ENCODE measurements at regions of chr12 and their contacts with region 1.

Region 1: GRCh38 chr12:102948941-102949352 is 8.5 kb upstream of the ASCL1 start:
- DNase-seq: no peak
- H3K4me3 Mint-ChIP-seq: no peak overlapping the region
- H3K27ac Mint-ChIP-seq: no peak overlapping the region
- H3K4me1 Mint-ChIP-seq: peaks cover 21% of the 10 kb centered on the region
- H3K27me3 Mint-ChIP-seq: peaks cover 45% of the 10 kb centered on the region

Region 2: DNA sequence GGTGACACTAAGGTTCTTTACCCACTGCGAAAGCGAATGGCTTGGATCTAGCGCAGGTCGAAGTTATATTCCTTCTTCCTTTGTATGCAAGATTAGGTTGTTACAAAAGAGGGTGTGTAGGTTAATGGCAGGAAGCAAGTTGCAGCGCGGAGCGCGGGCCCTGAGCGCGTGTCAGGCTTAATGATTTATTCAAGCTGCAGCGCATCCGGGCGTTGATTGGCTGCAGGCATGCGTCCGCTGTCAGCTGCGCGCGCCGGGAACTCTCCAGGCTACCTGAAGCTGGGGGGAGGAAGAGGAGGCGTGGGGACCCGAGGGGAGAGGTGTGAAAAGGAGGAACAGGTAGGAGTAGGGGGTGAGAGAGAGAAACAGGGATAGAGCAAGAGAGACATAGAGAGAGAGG is 15.9 kb after region 1 on chr12:
- intact Hi-C with region 1: loop called (anchors 2 kb)
- DNase-seq: no peak
- H3K4me3 Mint-ChIP-seq: peak overlapping the region; percentile 71
- H3K27ac Mint-ChIP-seq: no peak overlapping the region
- H3K4me1 Mint-ChIP-seq: peaks cover 30% of the 10 kb centered on the region
- H3K27me3 Mint-ChIP-seq: peaks cover 91% of the 10 kb centered on the region

Region 3: GRCh38 chr12:103482365-103482764 is 533.4 kb after region 1 on chr12:
- intact Hi-C with region 1: no loop called
- DNase-seq: no peak
- H3K4me3 Mint-ChIP-seq: peak overlapping the region; percentile 1
- H3K27ac Mint-ChIP-seq: no peak overlapping the region
- H3K4me1 Mint-ChIP-seq: peaks cover 6% of the 10 kb centered on the region
- H3K27me3 Mint-ChIP-seq: peaks cover 2% of the 10 kb centered on the region

Measured in activated T-helper 1 cell treated with anti-CD3 and anti-CD28 coated beads, Interleukin-12 subunit alpha, Interleukin-12 subunit beta, Interleukin-2, Interleukin-4 antibody, amounts not matched to agents 30 ng/mL and 10 ng/mL and 1 ng/mL, durations not matched to agents 14 hours and 24 hours and 36 hours (primary cell).